Activated CD4-positive, alpha-beta T cell treated with anti-CD3 and anti-CD28 coated beads for 36 hours (primary cell): ENCODE measurements at regions of chr2 and their contacts with region 1.

Region 1: DNA sequence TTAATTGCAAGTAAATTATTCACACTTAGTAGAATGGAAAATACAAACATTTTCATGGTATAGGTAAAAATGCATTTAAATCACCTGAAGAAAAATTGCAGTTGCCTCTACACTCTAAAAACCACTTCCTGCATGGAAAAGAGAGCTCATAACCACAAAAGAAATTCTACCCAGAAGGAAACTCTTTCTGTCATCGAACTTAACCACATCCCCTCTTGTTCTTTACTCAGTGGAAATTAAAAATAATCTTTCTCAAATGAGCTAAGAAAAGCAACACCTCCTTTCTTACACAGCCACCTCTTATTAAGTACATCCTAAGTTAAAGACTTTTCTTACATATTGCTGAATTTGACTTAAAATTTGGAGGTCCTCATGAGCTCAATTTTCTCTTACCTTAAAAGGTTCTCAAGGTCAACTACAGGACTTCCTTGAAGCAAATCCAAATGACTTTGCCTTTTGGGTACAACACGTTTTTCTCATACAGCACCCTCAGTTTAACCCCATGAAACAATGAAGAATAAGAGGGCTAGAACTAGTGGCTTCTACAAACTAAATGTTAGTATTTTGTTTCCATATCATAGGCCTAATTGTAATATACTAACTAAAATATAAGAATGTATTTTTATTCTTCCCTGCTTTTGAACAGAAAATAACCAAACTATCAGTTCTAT is 109.1 kb upstream of the CRIM1 start:
- DNase-seq: no peak
- ATAC-seq: peak; percentile 82
- H3K4me3 Mint-ChIP-seq: peak overlapping the region; percentile 54
- H3K27ac Mint-ChIP-seq: peak overlapping the region; percentile 84
- H3K4me1 Mint-ChIP-seq: peaks cover 61% of the 10 kb centered on the region
- H3K27me3 Mint-ChIP-seq: peaks cover 4% of the 10 kb centered on the region

Region 2: DNA sequence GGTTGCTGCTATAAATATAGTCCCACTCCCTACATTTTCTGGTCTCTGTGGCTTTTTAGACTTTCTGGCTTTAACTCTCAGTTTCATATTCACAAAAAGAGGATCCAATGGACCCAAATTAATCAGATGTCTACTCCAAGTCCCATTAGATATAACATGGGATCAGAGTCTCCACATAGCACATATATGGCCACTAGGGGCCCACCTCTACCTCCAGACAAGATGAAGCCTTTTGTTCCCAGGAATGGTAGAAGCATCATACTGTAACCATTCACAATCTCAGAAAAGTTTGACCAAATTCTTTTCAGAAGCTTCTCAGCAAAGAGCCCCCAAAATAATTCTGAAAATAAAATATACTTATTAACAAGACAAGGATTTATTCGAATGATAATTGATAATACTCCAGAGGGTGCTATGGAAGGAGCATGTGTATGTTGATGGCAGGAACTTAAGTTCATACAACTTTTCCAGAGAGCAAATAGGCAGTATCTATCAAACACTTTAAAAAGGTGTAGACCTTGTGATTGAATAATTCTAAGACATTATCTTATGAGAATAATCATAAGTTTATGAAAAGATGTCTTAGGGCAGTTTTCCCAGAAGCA is 273.2 kb before region 1 on chr2:
- CTCF ChIA-PET with region 1: no interaction called
- POLR2A ChIA-PET with region 1: no interaction called
- intact Hi-C with region 1: loop called in 1 of 2 experiments (anchors 10 kb)
- DNase-seq: peak; percentile 27
- ATAC-seq: peak; percentile 60
- H3K4me3 Mint-ChIP-seq: no peak overlapping the region
- H3K27ac Mint-ChIP-seq: no peak overlapping the region
- H3K4me1 Mint-ChIP-seq: peaks cover 2% of the 10 kb centered on the region
- H3K27me3 Mint-ChIP-seq: peaks cover 2% of the 10 kb centered on the region

Region 3: GRCh38 chr2:36147670-36148390 is 98.6 kb before region 1 on chr2:
- CTCF ChIA-PET with region 1: no interaction called
- POLR2A ChIA-PET with region 1: no interaction called
- intact Hi-C with region 1: loop called (anchors 2 to 5 kb)
- DNase-seq: no peak
- ATAC-seq: peak; percentile 84
- H3K4me3 Mint-ChIP-seq: no peak overlapping the region
- H3K27ac Mint-ChIP-seq: no peak overlapping the region
- H3K4me1 Mint-ChIP-seq: peaks cover 11% of the 10 kb centered on the region
- H3K27me3 Mint-ChIP-seq: peaks cover 7% of the 10 kb centered on the region

Region 4: DNA sequence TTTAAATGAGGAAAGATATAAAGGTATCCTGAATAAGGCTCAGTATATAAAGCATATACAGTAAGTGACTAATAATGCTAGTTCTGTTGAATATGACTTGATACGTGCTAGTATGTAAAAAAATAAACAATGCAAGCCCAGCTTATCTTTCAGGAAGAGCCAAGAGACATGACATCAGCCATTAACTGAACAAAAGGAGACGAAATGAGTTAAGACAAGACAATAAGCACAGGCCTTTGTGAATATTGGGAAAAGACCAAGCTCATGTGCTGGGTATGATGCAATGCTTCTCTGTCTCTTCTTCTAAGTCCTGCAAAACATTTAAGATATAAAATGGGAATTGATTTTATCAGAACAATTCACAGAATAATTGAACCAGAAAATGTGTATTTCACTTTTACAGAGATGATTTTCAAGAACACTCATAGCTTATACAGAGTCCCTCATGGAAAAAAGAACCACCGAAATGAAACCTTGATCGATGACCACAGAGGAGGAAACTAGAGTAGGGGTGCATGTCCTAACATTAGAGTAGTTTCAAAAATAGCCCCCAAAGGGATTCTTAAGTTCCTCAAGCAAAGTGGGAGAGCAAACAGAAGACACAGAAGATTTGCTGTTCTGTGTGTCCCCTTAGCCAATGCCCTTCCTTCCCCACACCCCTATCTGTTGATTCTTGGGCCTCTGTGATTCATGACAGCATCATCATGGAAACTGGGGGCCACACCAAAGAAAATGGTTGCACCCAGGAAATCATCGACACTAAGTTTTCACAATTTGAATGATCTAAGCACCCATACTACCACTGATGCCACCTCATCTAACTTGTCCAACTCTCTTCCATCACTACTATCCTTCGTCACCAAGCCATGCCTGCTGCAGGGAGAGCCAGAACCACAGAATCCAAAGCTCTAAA is 41.2 kb after region 1 on chr2:
- CTCF ChIA-PET with region 1: no interaction called
- POLR2A ChIA-PET with region 1: no interaction called
- intact Hi-C with region 1: loop called in 1 of 2 experiments (anchors 2 kb)
- DNase-seq: peak; percentile 66
- ATAC-seq: peak; percentile 87
- H3K4me3 Mint-ChIP-seq: no peak overlapping the region
- H3K27ac Mint-ChIP-seq: peak overlapping the region; percentile 64
- H3K4me1 Mint-ChIP-seq: peaks cover 17% of the 10 kb centered on the region
- H3K27me3 Mint-ChIP-seq: peaks cover 6% of the 10 kb centered on the region

Region 5: DNA sequence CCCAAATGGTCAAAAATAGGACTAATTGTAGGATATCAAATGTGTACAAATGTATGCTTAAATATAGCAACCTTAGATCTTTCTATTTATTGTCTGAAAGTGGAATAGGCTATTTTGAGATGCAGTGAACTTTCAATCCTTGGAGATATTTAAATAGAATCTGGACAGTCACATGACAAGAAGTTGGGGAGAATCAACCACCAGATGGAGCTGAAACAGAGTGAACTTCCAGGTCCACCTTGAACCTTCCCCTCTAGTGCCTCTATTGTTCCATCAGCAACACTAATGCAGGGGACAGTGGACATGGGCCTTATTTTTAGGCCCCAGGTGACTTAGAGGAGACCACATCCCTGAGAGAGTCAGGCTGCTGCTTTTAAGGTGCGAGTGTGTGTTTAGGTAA is 72.1 kb after region 1 on chr2:
- CTCF ChIA-PET with region 1: no interaction called
- POLR2A ChIA-PET with region 1: no interaction called
- intact Hi-C with region 1: loop called in 1 of 2 experiments (anchors 5 kb)
- DNase-seq: no peak
- ATAC-seq: no peak
- H3K4me3 Mint-ChIP-seq: no peak overlapping the region
- H3K27ac Mint-ChIP-seq: no peak overlapping the region
- H3K4me1 Mint-ChIP-seq: no peaks in the 10 kb centered on the region
- H3K27me3 Mint-ChIP-seq: peaks cover 11% of the 10 kb centered on the region

Region 6: GRCh38 chr2:36633470-36634092 is 387.1 kb after region 1 on chr2:
- CTCF ChIA-PET with region 1: no interaction called
- POLR2A ChIA-PET with region 1: no interaction called
- intact Hi-C with region 1: no loop called
- DNase-seq: no peak
- ATAC-seq: peak; percentile 53
- H3K4me3 Mint-ChIP-seq: no peak overlapping the region
- H3K27ac Mint-ChIP-seq: no peak overlapping the region
- H3K4me1 Mint-ChIP-seq: no peaks in the 10 kb centered on the region
- H3K27me3 Mint-ChIP-seq: peaks cover 9% of the 10 kb centered on the region